Naive thymus-derived CD8-positive, alpha-beta T cell (primary cell): ENCODE measurements at regions of chr17 and their contacts with region 1.

Region 1: DNA sequence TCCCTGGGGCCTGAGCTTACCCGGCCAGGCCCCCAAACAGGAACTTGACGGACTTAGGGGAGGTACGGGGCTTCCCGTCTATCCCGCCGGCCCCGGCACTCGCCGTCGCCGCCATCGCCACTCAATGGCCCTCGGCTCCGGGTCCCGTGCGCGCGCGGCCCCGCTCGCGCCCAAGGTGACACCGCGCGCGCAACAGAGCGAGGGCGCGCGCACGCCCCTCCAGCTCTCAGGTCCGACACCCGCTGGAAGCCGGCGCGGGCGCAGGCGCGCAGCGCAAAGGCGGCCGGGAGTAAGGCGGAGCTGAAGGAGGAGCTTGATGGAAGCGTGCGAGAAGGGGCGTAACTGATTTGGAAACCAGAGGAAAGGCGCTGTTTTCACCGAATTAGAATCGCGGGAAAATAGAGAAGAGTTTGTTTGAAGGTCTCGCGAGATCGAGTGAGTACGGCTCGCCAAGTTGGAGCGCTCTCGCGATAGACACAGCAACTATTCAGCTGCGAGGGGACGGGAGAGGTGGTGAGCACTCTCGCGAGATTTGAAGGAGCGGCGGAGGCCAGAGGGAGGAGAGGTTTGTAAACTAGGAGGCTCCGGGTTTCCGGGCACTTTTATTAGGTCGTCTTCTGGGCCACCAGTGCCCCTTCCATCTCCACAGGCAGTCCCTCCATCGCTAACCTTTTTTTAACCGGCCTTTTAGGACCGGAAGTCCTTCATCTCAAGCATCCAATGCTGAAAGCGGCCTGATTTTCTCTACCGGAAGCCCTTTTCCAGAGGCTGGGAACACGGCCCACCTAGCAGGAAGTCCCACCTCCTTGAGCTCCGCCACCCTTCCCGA is at the starts of genes RNF167 and SLC25A11:
- DNase-seq: peak; percentile 90 to 99 (median 96)
- ATAC-seq: peak; percentile 85 to 88
- H3K4me3 Mint-ChIP-seq: peak within 1 kb of the TSS; percentile 91 to 100 (median 96)
- H3K27ac Mint-ChIP-seq: peak within 1 kb of the TSS; percentile 93 to 99 (median 98)
- H3K4me1 Mint-ChIP-seq: peaks cover 44 to 82% (median 72%) of the 10 kb centered on the region in 4 donors
- H3K27me3 Mint-ChIP-seq: no peaks in the 10 kb centered on the region
- polyA plus RNA-seq, gene RNF167: 30.3 to 50.0 (median 32.2) TPM
- polyA plus RNA-seq, gene SLC25A11: 75.3 to 78.6 (median 77.6) TPM

Region 2: GRCh38 chr17:4903051-4903818 is 36.8 kb before region 1 on chr17 and contains the start of gene CHRNE:
- POLR2A ChIA-PET with region 1: interaction called, 25 read pairs
- DNase-seq: peak; percentile 51 to 88 (median 76)
- ATAC-seq: peak; percentile 26 to 27
- H3K4me3 Mint-ChIP-seq: peak within 1 kb of the TSS; percentile 40 to 86 (median 72)
- H3K27ac Mint-ChIP-seq: peak within 1 kb of the TSS; percentile 27 to 99 (median 84)
- H3K4me1 Mint-ChIP-seq: peaks cover 26 to 45% (median 41%) of the 10 kb centered on the region in 4 donors
- H3K27me3 Mint-ChIP-seq: peaks cover 0 to 2% (median 0%) of the 10 kb centered on the region in 5 donors
- polyA plus RNA-seq, gene CHRNE: 0.19 to 0.58 (median 0.20) TPM

Region 3: DNA sequence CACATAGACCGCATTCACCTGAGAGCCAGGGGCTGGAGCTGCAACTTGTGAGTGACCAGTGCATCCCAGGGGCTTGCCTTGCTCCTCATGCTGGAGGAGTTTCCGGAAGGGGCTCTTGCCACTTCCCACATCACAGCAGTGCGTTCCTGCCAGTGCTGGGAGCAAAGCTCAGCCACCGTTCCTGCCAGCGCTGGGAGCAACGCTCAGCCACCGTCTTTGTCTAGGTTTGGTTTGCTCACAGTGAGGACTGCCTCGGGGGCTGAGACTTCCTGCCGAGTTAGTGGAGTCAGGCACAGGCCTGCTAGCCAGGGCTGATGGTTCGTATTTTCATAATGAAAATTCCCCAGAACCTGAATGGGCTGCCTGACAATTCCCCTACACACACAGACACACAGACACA is 31.7 kb before region 1 on chr17:
- POLR2A ChIA-PET with region 1: interaction called, 22 read pairs
- DNase-seq: peak in 1 of 10 donors; percentile 25
- ATAC-seq: peak in 1 of 2 donors; percentile 26
- H3K4me3 Mint-ChIP-seq: no peak overlapping the region
- H3K27ac Mint-ChIP-seq: no peak overlapping the region
- H3K4me1 Mint-ChIP-seq: peaks cover 3 to 10% (median 5%) of the 10 kb centered on the region in 4 donors
- H3K27me3 Mint-ChIP-seq: no peaks in the 10 kb centered on the region

Region 4: DNA sequence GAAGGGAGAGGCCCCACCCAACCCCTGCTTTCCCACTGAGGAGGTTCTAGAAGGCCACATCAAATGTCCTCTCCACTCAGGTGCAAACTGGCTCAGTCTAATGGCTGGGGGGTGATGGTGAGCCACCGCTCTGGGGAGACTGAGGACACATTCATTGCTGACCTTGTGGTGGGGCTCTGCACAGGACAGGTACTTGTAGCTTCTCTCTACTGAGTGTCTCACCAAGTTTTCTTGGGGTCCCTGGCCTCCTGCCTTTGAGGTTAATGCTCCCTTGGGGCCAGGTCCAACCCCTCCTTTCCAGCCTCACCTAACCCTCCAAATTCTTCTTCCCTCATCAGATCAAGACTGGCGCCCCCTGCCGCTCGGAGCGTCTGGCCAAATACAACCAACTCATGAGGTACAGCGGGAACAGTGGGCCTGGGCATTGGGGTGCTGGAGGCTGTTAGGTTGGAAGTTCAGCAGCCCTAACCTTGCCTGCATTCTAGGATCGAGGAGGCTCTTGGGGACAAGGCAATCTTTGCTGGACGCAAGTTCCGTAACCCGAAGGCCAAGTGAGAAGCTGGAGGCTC is 16.6 kb after region 1 on chr17:
- POLR2A ChIA-PET with region 1: interaction called, 635 read pairs
- DNase-seq: peak in 3 of 10 donors; percentile 28 to 37 (median 32)
- ATAC-seq: no peak
- H3K4me3 Mint-ChIP-seq: no peak overlapping the region
- H3K27ac Mint-ChIP-seq: no peak overlapping the region
- H3K4me1 Mint-ChIP-seq: peaks cover 5 to 14% (median 10%) of the 10 kb centered on the region in 4 donors
- H3K27me3 Mint-ChIP-seq: no peaks in the 10 kb centered on the region

Region 5: GRCh38 chr17:4966844-4967538 is 27.0 kb after region 1 on chr17:
- POLR2A ChIA-PET with region 1: interaction called, 635 read pairs
- DNase-seq: peak in 9 of 10 donors; percentile 79 to 98 (median 94)
- ATAC-seq: peak; percentile 84 to 86
- H3K4me3 Mint-ChIP-seq: no peak overlapping the region
- H3K27ac Mint-ChIP-seq: peak overlapping the region in 3 of 10 donors; percentile 57 to 72 (median 61)
- H3K4me1 Mint-ChIP-seq: peaks cover 15 to 22% (median 21%) of the 10 kb centered on the region in 4 donors
- H3K27me3 Mint-ChIP-seq: no peaks in the 10 kb centered on the region

Region 6: GRCh38 chr17:4986951-4987766 is 47.1 kb after region 1 on chr17 and contains the start of gene CAMTA2:
- POLR2A ChIA-PET with region 1: interaction called, 37 read pairs
- DNase-seq: peak; percentile 81 to 93 (median 84)
- ATAC-seq: peak; percentile 89
- H3K4me3 Mint-ChIP-seq: peak within 1 kb of the TSS; percentile 83 to 97 (median 91)
- H3K27ac Mint-ChIP-seq: peak within 1 kb of the TSS; percentile 85 to 97 (median 95)
- H3K4me1 Mint-ChIP-seq: peaks cover 30 to 49% (median 42%) of the 10 kb centered on the region in 4 donors
- H3K27me3 Mint-ChIP-seq: no peaks in the 10 kb centered on the region
- polyA plus RNA-seq, gene CAMTA2: 4.1 to 18.9 (median 6.3) TPM

Region 7: GRCh38 chr17:4997302-4998026 is 57.5 kb after region 1 on chr17 and contains the starts of genes INCA1 and KIF1C:
- POLR2A ChIA-PET with region 1: interaction called, 26 read pairs
- DNase-seq: peak; percentile 82 to 96 (median 90)
- ATAC-seq: peak; percentile 91 to 95
- H3K4me3 Mint-ChIP-seq: peak within 1 kb of the TSS; percentile 76 to 91 (median 84)
- H3K27ac Mint-ChIP-seq: peak within 1 kb of the TSS; percentile 66 to 95 (median 86)
- H3K4me1 Mint-ChIP-seq: peaks cover 17 to 29% (median 20%) of the 10 kb centered on the region in 4 donors
- H3K27me3 Mint-ChIP-seq: no peaks in the 10 kb centered on the region
- polyA plus RNA-seq, gene INCA1: 0.23 TPM in 1 of 3 donors, not detected in the others
- polyA plus RNA-seq, gene KIF1C: 2.6 to 3.0 (median 3.0) TPM